Activated naive CD4-positive, alpha-beta T cell treated with anti-CD3 and anti-CD28 coated beads, Interleukin-2, amount 10 ng/mL, durations not matched to agents 7 days and 5 days (primary cell): ENCODE measurements at regions of chr10 and their contacts with region 1.

Region 1: DNA sequence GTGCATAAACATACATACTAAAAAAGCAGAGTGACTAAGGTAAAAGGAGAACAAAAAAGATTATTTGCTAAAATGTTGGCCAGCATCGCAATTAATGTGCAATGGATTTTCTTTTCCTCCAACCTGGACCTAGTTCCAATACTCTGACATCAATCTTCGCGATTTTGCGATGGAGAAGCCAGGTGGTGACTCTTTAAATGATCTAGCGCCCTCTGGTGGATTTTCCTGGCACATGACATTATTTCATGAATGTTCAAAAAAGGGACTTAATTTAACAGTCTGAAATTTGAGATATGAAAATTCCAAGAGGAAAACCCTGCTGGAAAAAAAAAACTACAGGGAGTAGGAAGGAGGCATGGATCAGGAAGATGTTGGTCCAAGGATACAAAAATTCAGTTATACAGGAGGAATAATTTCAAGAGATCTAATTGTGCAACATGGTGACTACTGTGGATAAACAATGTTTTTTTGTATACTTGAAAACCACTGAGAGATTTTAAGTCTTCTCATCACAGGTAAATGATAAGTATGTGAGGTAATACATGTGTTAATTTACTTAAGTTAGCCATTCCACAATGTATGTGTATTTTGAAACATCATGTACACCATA is 4.3 kb upstream of the KCNMA1 start:
- DNase-seq: peak; percentile 62
- H3K4me3 Mint-ChIP-seq: no peak overlapping the region
- H3K27ac Mint-ChIP-seq: no peak overlapping the region
- H3K4me1 Mint-ChIP-seq: peaks cover 2% of the 10 kb centered on the region
- H3K27me3 Mint-ChIP-seq: peaks cover 48% of the 10 kb centered on the region

Region 2: GRCh38 chr10:77165445-77166208 is 476.3 kb before region 1 on chr10:
- CTCF ChIA-PET with region 1: interaction called, 70 read pairs
- DNase-seq: peak; percentile 42
- H3K4me3 Mint-ChIP-seq: no peak overlapping the region
- H3K27ac Mint-ChIP-seq: no peak overlapping the region
- H3K4me1 Mint-ChIP-seq: no peaks in the 10 kb centered on the region
- H3K27me3 Mint-ChIP-seq: peaks cover 14% of the 10 kb centered on the region

Region 3: DNA sequence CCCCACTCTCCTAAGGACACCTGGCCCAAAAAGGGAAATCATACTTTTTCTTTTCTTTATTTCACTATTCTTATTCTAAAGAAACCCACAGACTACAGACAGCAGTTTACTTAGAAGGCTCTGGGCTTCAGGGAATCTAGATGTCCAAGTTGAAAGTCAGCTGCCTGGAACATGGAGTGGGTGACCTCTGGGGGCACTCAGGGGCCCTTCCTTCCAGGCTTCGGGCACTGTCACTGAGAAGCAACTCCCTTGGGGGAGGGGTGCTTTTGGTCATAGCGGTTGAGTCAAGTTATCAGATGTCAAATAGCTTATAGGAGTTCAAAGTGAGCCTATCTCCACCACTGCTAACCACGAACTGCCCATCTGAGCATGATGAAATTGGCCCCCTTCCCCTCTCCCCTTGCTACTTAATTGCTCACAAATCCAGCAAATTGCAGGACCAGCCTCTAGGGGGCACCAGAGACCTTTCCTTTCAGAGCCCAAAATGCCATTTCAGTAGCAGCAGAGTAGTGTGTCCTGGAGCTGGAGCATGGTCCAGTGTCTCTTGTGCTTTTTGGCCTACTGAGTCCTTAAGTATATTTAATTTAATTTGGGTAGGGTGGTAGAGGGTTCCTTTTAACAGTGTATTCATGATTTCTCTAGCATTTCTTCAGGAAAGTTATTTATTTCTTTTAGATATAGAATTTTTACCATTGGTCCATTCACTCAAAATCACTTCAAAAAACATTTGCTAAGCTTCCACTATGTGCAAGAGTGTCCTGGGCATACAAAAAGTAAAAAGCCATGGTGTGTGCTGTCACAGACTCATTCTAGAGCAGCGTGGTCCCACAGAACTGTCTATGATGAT is 468.1 kb before region 1 on chr10:
- CTCF ChIA-PET with region 1: interaction called, 83 read pairs
- DNase-seq: peak; percentile 77
- H3K4me3 Mint-ChIP-seq: no peak overlapping the region
- H3K27ac Mint-ChIP-seq: no peak overlapping the region
- H3K4me1 Mint-ChIP-seq: no peaks in the 10 kb centered on the region
- H3K27me3 Mint-ChIP-seq: peaks cover 6% of the 10 kb centered on the region